Activated CD4-positive, alpha-beta T cell treated with anti-CD3 and anti-CD28 coated beads, Interleukin-2, amount 10 ng/mL, durations not matched to agents 24 days and 14 days (primary cell): ENCODE measurements at regions of chr7 and their contacts with region 1.

Region 1: DNA sequence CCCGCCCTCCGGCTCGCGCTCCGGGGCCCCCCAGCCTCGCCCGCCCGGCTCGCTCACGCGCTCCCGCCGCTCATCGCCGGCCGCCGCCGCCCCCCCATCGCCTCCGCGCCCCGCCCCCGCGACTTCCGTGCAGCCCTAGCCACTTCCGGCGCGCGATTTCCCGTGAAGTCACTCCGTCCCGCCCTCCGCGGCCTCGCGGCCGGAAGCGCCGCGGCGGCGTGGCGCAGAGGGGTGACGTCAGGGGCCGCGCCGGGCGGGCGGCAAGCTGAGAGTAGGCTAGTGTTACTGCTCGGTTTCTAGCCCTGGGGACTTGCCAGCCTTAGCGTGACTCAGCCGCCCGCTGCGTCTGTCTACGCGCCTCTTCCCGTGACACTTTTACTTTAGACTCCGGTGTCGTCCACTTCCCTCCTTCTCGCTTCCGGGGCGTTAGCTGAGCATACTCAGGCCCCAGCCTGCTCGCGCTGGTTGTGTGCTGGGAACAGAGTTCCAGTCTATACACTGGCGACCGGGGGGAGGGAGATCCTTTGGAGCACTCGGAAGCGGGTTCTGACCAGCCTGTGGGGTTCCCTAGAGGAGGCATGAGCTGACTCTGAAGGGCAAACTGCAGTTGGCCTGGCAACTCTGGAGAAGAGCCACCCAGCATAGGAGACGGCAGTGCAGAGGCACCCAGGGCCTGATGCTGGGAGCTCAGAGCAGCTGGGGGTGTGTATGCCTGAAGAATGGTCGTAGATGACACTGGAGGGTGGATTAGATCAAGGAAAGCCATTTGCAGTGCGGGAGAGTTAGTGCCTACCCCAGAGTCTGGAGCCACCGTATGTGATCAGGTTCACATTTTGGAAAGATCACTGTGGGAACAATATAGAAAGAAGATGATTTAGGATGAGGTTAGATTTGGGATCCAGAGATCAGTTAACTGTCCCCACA is at the start of gene PURB:
- DNase-seq: peak; percentile 99
- H3K4me3 Mint-ChIP-seq: peak within 1 kb of the TSS; percentile 97
- H3K27ac Mint-ChIP-seq: peak within 1 kb of the TSS; percentile 99
- H3K4me1 Mint-ChIP-seq: peaks cover 42% of the 10 kb centered on the region
- H3K27me3 Mint-ChIP-seq: no peaks in the 10 kb centered on the region
- total RNA-seq, gene PURB: 41.4 and 41.5 TPM in 2 replicates

Region 2: DNA sequence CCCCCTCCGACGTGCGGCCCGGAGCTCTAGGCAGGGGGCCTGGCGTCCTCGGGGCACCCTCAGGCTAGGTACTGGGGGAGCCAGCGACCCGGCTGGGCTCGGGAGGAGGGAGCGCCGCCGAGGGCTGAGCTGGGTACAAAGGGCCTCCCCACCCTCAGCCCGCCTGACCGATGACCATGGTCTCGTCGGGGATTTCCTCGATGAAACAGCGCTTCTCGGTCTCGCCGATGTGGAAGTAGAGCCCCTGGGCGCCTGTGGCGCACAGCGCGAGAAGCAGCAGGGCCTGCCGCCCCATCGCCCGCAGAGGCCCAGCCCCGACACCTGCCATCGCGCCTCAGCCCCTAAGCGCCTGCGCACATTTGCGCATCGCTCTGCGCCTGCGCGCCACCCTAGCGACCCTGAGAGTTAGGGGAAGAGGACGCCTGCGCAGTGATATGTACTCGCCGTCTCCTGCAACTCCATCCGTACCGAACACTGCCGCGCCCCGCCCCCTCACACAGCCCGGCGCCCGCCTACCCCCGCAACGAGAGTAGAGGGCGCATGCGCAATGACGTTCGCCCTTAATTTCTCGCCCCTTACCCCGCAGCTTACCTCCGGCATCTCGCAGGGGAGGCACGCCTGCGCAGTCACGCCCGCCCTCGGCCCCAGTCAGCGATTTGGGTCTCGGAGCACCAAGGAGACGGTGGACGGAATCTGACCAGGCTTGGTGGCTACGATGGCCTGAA is 303.6 kb before region 1 on chr7 and contains the start of gene TMED4:
- intact Hi-C with region 1: loop called (anchors 1 kb)
- DNase-seq: peak; percentile 100
- H3K4me3 Mint-ChIP-seq: peak within 1 kb of the TSS; percentile 92
- H3K27ac Mint-ChIP-seq: peak within 1 kb of the TSS; percentile 92
- H3K4me1 Mint-ChIP-seq: peaks cover 35% of the 10 kb centered on the region
- H3K27me3 Mint-ChIP-seq: peaks cover 4% of the 10 kb centered on the region
- total RNA-seq, gene TMED4: 78.4 and 80.2 TPM in 2 replicates

Region 3: GRCh38 chr7:44797329-44798251 is 88.1 kb before region 1 on chr7:
- intact Hi-C with region 1: loop called (anchors 1 kb)
- DNase-seq: peak; percentile 95
- H3K4me3 Mint-ChIP-seq: peak overlapping the region; percentile 98
- H3K27ac Mint-ChIP-seq: peak overlapping the region; percentile 97
- H3K4me1 Mint-ChIP-seq: peaks cover 31% of the 10 kb centered on the region
- H3K27me3 Mint-ChIP-seq: no peaks in the 10 kb centered on the region

Region 4: DNA sequence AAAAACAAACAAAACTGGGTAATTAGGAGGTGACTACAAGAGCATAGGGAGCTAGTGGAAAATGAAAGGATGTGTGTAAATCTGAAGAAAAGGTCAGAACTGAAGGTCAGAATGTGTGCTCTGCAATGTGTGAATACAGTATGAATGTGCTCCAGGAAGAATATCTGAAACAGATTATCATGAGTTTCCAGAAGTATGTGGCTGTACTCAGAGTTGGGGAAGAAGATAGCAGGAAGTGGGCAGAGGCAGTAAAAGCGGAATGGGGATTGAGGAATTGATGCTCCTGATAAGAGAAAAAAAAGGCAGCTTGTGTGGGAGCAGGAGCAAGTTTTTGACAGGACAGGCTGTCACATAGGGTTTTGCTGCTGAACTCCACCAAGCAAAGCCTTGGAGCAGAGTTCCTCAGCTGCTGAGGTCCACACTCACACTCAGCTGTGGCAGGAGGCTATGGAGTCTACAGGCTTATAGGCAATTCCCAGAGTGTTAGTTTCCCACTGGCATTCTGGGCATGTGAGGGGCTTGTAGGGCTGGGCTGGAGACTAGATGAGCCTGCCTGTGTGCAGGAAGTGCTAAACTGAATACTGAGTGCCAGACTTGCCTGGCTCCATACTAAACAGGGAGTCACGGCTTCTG is 60.6 kb before region 1 on chr7:
- intact Hi-C with region 1: no loop called
- DNase-seq: no peak
- H3K4me3 Mint-ChIP-seq: no peak overlapping the region
- H3K27ac Mint-ChIP-seq: peak overlapping the region; percentile 63
- H3K4me1 Mint-ChIP-seq: peaks cover 15% of the 10 kb centered on the region
- H3K27me3 Mint-ChIP-seq: no peaks in the 10 kb centered on the region

Region 5: GRCh38 chr7:44867073-44867995 is 18.3 kb before region 1 on chr7:
- intact Hi-C with region 1: loop called (anchors 2 kb)
- DNase-seq: peak; percentile 72
- H3K4me3 Mint-ChIP-seq: no peak overlapping the region
- H3K27ac Mint-ChIP-seq: peak overlapping the region; percentile 21
- H3K4me1 Mint-ChIP-seq: peaks cover 9% of the 10 kb centered on the region
- H3K27me3 Mint-ChIP-seq: peaks cover 3% of the 10 kb centered on the region

Region 6: GRCh38 chr7:44980393-44981034 is 94.9 kb after region 1 on chr7:
- intact Hi-C with region 1: loop called (anchors 1 kb)
- DNase-seq: peak; percentile 89
- H3K4me3 Mint-ChIP-seq: peak overlapping the region; percentile 93
- H3K27ac Mint-ChIP-seq: peak overlapping the region; percentile 90
- H3K4me1 Mint-ChIP-seq: peaks cover 63% of the 10 kb centered on the region
- H3K27me3 Mint-ChIP-seq: no peaks in the 10 kb centered on the region

Region 7: GRCh38 chr7:45026984-45027773 is 141.5 kb after region 1 on chr7:
- intact Hi-C with region 1: loop called (anchors 5 kb)
- DNase-seq: peak; percentile 84
- H3K4me3 Mint-ChIP-seq: peak overlapping the region; percentile 85
- H3K27ac Mint-ChIP-seq: peak overlapping the region; percentile 85
- H3K4me1 Mint-ChIP-seq: peaks cover 68% of the 10 kb centered on the region
- H3K27me3 Mint-ChIP-seq: no peaks in the 10 kb centered on the region

Region 8: GRCh38 chr7:45563941-45564461 is 678.3 kb after region 1 on chr7:
- intact Hi-C with region 1: no loop called
- DNase-seq: no peak
- H3K4me3 Mint-ChIP-seq: no peak overlapping the region
- H3K27ac Mint-ChIP-seq: no peak overlapping the region
- H3K4me1 Mint-ChIP-seq: no peaks in the 10 kb centered on the region
- H3K27me3 Mint-ChIP-seq: peaks cover 4% of the 10 kb centered on the region